Mammary epithelial cell (primary cell): ENCODE measurements at regions of chr3 and their contacts with region 1.

Region 1: GRCh38 chr3:109369510-109369909 is 32.2 kb upstream of the DPPA4 start:
- DNase-seq: no peak
- H3K4me3 ChIP-seq: no peak overlapping the region
- H3K27ac ChIP-seq: no peak overlapping the region
- H3K4me1 ChIP-seq: no peaks in the 10 kb centered on the region
- H3K27me3 ChIP-seq: no peaks in the 10 kb centered on the region
- CTCF ChIP-seq: no peak

Region 2: DNA sequence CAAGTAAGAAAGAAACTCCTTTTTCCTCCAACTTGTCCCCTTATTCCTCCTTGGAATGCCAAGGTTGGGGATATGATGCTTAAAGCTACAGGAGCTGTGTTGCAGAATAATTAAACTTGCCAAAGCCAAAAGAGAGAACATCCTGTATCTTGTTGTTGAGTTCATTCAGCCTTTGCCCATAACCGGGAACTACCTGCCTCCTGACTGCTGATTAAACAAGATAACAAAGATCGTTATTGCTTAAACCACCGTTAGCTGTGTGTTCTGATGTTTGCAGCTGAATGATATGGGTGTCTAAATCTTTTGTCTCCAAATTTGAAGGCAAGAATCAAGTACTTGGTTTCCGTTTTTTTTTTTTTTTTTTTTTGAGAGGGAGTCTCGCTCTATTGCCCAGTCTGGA is 114.7 kb before region 1 on chr3:
- CTCF ChIA-PET with region 1: interaction called, 16 read pairs
- dilution Hi-C with region 1: no loop called
- in situ Hi-C with region 1: no loop called
- intact Hi-C with region 1: no loop called
- DNase-seq: no peak
- H3K4me3 ChIP-seq: no peak overlapping the region
- H3K27ac ChIP-seq: no peak overlapping the region
- H3K4me1 ChIP-seq: no peaks in the 10 kb centered on the region
- H3K27me3 ChIP-seq: no peaks in the 10 kb centered on the region
- CTCF ChIP-seq: no peak

Region 3: DNA sequence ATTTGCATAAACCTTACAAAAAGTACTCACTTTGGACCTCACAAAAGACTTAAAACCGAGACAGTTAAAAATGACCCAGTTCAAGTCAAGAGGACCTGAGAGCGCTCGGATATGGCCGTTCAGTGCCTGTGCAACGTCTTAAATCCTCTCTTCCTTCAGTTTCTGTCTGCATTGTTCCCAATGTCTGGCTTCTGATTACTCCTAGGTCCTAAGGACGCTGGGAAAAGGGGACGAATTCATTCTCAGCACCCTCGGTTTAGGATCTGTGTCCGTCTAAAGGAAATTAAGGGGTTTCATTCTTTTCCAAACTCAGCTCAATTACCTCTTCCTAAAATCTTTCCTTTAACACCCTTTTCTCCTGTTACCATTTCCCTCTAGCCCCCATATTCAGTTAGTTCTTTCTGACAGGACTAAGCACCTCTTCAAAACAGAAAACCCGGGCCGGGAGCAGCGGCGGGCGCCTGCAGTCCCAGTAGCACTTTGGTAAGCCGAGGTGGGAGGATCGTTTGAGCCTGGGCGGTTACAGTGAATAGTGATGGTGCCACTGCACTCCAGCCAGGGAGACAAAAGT is 33.1 kb before region 1 on chr3:
- CTCF ChIA-PET with region 1: no interaction called
- dilution Hi-C with region 1: no loop called
- in situ Hi-C with region 1: no loop called
- intact Hi-C with region 1: no loop called
- DNase-seq: no peak
- H3K4me3 ChIP-seq: no peak overlapping the region
- H3K27ac ChIP-seq: no peak overlapping the region
- H3K4me1 ChIP-seq: no peaks in the 10 kb centered on the region
- H3K27me3 ChIP-seq: no peaks in the 10 kb centered on the region
- CTCF ChIP-seq: no peak

Region 4: DNA sequence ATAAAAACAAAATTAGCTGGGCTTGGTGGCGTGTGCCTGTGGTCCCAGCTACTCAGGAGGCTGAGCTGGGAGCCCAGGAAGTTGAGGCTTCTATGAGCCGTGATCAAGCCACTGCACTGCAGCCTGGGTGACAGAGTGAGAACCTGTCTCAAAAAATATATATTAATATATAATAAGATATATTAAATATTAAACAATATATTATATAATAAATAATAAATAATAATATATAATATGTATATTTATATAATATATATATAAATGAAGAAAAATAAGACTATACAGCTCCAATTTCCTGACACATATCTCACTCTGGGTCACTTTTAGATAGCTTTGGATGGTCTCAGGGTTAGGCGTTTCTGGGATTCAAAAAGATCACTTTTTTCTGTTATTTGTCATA is 42.0 kb after region 1 on chr3:
- CTCF ChIA-PET with region 1: no interaction called
- dilution Hi-C with region 1: no loop called
- in situ Hi-C with region 1: no loop called
- intact Hi-C with region 1: no loop called
- DNase-seq: no peak
- H3K4me3 ChIP-seq: no peak overlapping the region
- H3K27ac ChIP-seq: no peak overlapping the region
- H3K4me1 ChIP-seq: no peaks in the 10 kb centered on the region
- H3K27me3 ChIP-seq: no peaks in the 10 kb centered on the region
- CTCF ChIP-seq: no peak

Region 5: DNA sequence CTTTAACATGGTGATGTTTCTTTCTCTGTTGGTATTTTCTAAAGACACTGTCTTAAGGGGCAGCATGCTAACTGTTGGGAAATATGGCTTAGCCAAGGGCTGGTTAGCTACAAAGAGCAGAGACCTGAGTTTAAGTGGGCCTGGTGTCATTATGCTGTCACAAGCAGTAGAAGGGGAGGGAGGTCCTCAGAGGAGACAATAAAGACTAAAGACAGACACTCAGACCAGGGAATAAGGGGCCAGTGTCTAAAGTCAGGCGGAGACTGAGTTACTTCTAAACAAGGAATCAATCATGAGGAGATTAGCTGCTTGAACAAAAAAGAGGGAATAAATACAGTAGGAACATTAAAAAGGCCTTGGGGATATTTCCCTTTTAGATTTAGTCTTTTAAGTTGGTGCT is 110.5 kb after region 1 on chr3:
- CTCF ChIA-PET with region 1: no interaction called
- dilution Hi-C with region 1: no loop called
- in situ Hi-C with region 1: no loop called
- intact Hi-C with region 1: no loop called
- DNase-seq: no peak
- H3K4me3 ChIP-seq: no peak overlapping the region
- H3K27ac ChIP-seq: no peak overlapping the region
- H3K4me1 ChIP-seq: no peaks in the 10 kb centered on the region
- H3K27me3 ChIP-seq: no peaks in the 10 kb centered on the region
- CTCF ChIP-seq: no peak

Region 6: GRCh38 chr3:110180733-110181132 is 811.2 kb after region 1 on chr3:
- CTCF ChIA-PET with region 1: no interaction called
- dilution Hi-C with region 1: no loop called
- in situ Hi-C with region 1: no loop called
- intact Hi-C with region 1: no loop called
- DNase-seq: no peak
- H3K4me3 ChIP-seq: no peak overlapping the region
- H3K27ac ChIP-seq: no peak overlapping the region
- H3K4me1 ChIP-seq: no peaks in the 10 kb centered on the region
- H3K27me3 ChIP-seq: no peaks in the 10 kb centered on the region
- CTCF ChIP-seq: no peak